ENCODE measurements at regions of chr19 and their contacts with region 1.

Region 1: GRCh38 chr19:15107061-15108010 is at the start of gene SYDE1:
- DNase-seq: no peak
- ATAC-seq: peak; percentile 75
- total RNA-seq, gene SYDE1: 15.7 TPM

Region 2: DNA sequence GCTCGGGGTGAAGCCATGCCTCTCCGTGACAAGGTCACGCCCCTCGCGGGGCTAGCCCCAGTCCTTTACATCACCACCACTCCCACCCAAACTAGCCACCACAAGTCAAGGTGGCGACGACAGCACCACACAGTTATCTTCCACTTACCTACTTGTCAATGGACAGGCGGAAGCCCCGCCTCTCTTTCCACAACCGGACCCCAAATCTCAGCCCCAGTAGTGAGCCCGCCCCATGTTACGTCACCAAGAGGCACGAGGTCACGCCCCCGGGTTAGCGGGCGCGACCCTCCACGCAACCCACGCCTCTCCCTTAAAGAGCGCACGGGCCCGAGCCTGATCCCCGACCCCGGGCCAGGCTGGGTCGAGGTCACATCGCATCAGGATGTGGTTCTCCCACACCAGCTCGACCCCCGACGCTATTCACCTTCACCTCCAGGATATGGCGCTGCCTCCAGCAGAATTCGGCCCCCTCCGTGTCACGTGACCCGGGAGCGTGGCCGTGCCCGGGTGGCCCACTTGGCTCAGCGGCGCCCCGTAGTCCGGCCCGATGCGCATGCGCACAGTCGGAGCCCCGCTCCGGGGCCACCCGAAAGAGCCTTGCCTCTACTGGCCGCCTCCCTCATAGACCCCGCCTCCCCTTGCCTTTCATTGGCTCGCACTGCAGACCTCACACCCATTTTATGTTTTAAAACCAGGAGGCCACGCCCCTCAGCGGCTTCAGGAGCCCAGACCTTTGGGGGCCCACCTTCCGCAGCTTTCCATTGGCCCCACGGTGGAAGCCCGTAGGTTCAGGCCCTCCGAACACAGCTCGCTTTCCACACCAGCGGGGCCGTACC is 18.1 kb after region 1 on chr19:
- intact Hi-C with region 1: loop called (anchors 1 kb)
- DNase-seq: peak; percentile 98
- ATAC-seq: peak; percentile 93

Region 3: DNA sequence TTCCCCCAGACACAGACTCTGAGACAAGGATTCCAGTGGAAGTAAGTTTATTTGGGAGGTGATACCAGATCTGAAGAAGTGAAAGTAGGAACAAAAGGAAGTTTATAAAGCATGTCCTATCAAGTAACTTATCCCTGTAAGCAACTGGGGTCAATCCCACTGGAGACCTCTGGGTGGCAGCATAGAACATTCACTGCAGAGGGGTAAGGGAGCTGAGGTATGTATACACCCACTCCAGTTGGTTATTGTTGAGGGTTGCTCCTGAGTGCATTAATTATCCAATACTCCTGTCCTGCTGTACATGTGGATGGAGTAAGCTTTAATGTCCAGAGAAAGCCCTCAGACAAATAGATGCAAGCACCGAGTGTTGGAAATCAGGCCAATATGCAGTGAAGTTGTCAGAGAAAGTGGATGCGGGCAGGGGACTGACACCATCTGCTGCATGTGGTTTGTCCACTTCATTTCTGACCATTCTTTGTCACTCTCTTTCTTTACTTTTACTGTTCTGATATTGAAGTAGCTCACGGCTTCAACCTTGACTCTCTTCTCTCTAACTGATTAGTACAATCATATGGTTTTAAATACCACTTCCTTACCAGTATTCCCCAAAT is 46.8 kb after region 1 on chr19:
- intact Hi-C with region 1: no loop called
- DNase-seq: no peak
- ATAC-seq: no peak